ENCODE measurements at regions of chr2 and their contacts with region 1.

Region 1: GRCh38 chr2:160324161-160324800 is 124.2 kb upstream of the ITGB6 start:
- DNase-seq: peak; percentile 62
- H3K4me3 Mint-ChIP-seq: no peak overlapping the region
- H3K27ac Mint-ChIP-seq: no peak overlapping the region
- H3K4me1 Mint-ChIP-seq: peaks cover 80% of the 10 kb centered on the region
- H3K27me3 Mint-ChIP-seq: no peaks in the 10 kb centered on the region

Region 2: DNA sequence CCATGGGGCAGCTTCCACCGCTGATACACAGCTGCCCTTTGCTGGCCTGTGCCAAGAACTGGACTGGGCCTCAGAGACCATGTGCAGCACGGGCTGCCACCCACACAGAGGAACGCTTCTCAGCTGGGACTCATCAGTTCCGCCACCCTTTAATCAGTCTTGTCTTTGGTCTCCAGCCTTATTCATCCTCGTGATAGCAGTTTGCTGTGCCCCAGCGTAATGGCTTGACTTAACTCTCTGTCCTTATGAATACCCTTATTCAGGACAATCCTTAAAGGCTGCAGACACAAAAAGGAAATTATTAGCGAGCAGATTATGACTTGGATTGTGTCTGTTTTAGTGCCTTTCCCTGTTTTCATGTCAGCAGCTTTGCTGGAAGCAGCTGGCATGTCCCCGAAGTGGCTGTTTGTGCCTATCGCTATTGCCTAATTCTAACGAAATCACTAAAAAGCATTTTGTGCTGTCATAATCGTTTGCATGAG is 1638.0 kb before region 1 on chr2:
- CTCF ChIA-PET with region 1: no interaction called
- POLR2A ChIA-PET with region 1: no interaction called
- intact Hi-C with region 1: no loop called
- DNase-seq: no peak
- H3K4me3 Mint-ChIP-seq: no peak overlapping the region
- H3K27ac Mint-ChIP-seq: no peak overlapping the region
- H3K4me1 Mint-ChIP-seq: no peaks in the 10 kb centered on the region
- H3K27me3 Mint-ChIP-seq: peaks cover 6% of the 10 kb centered on the region

Region 3: DNA sequence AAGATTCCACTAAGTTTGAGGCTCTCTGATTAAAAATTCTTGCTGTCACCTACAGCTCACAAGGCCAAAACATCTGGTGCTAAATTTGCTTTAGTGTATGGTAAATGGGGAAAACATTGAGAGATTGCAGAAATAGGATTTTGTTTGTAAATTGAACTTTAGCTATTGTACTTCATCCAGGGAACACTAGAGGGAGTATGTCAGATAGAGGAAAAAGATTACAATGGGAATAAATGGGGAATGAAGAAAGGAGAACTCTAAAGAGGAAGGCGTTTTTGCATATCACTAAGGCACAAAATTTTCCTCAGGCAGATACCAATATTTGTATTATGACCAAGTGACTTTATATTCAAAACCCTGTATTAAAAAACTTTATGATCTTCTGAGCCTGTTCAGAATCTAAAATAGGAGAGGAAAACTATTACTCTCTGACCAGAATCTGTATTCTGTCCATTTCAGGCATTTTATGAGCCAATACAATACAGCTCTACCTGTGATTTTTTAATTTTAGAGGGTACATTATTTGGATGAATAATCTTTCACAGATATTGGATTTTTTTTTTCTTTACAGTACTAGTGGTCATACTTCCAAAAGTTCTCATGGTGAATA is 71.9 kb before region 1 on chr2:
- CTCF ChIA-PET with region 1: interaction called, 14 read pairs
- POLR2A ChIA-PET with region 1: no interaction called
- intact Hi-C with region 1: no loop called
- DNase-seq: no peak
- H3K4me3 Mint-ChIP-seq: no peak overlapping the region
- H3K27ac Mint-ChIP-seq: no peak overlapping the region
- H3K4me1 Mint-ChIP-seq: no peaks in the 10 kb centered on the region
- H3K27me3 Mint-ChIP-seq: peaks cover 1% of the 10 kb centered on the region

Region 4: GRCh38 chr2:160288324-160288723 is 36.0 kb before region 1 on chr2:
- CTCF ChIA-PET with region 1: no interaction called
- POLR2A ChIA-PET with region 1: no interaction called
- intact Hi-C with region 1: no loop called
- DNase-seq: no peak
- H3K4me3 Mint-ChIP-seq: no peak overlapping the region
- H3K27ac Mint-ChIP-seq: no peak overlapping the region
- H3K4me1 Mint-ChIP-seq: peaks cover 19% of the 10 kb centered on the region
- H3K27me3 Mint-ChIP-seq: no peaks in the 10 kb centered on the region

Region 5: DNA sequence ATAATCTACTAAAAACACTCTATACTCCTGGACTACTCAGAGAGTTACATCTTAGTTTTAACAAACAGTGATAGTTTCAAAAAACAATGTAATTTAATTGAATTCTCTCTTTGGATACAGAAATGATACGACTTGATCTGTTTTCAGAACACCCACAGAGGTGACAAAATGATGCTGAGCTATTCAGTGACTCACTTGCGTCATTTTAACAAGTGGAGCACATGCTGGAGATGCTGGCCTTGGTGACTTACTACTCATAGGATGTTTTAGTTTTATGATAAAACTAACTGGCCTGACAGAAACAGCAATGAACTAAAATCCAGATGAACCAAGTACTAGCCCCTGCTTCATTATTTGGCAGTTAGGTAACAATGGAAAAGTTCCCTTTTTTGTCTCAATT is 22.9 kb before region 1 on chr2:
- CTCF ChIA-PET with region 1: interaction called, 6 read pairs
- POLR2A ChIA-PET with region 1: interaction called, 3 read pairs
- intact Hi-C with region 1: loop called (anchors 1 kb)
- DNase-seq: peak; percentile 53
- H3K4me3 Mint-ChIP-seq: no peak overlapping the region
- H3K27ac Mint-ChIP-seq: peak overlapping the region; percentile 55
- H3K4me1 Mint-ChIP-seq: peaks cover 55% of the 10 kb centered on the region
- H3K27me3 Mint-ChIP-seq: no peaks in the 10 kb centered on the region

Region 6: DNA sequence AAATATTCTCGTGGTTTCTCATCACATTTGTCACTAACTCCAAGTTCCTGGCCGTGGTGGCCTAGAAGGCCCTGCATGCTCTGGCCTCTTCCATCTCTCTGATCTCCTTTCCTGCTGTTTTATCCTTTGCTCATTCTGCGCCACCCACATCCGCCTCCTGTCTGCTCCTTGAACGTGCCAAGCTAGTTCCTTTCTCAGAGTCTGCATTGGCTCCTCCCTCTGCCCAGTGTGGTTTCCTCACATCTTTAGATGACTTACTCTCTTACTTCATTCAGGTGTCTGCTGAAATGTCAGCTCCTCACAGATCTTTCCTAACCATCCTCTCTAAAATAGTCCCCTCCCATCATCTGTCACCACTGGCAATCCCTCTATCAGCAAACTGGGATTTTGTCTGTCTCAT is 328.0 kb after region 1 on chr2:
- CTCF ChIA-PET with region 1: no interaction called
- POLR2A ChIA-PET with region 1: interaction called, 3 read pairs
- intact Hi-C with region 1: loop called (anchors 10 kb)
- DNase-seq: peak; percentile 82
- H3K4me3 Mint-ChIP-seq: no peak overlapping the region
- H3K27ac Mint-ChIP-seq: peak overlapping the region; percentile 30
- H3K4me1 Mint-ChIP-seq: peaks cover 26% of the 10 kb centered on the region
- H3K27me3 Mint-ChIP-seq: peaks cover 1% of the 10 kb centered on the region

Region 7: GRCh38 chr2:160994141-160995002 is 670.1 kb after region 1 on chr2:
- CTCF ChIA-PET with region 1: interaction called, 33 read pairs
- POLR2A ChIA-PET with region 1: no interaction called
- intact Hi-C with region 1: loop called (anchors 1 kb)
- DNase-seq: peak; percentile 71
- H3K4me3 Mint-ChIP-seq: no peak overlapping the region
- H3K27ac Mint-ChIP-seq: no peak overlapping the region
- H3K4me1 Mint-ChIP-seq: peaks cover 6% of the 10 kb centered on the region
- H3K27me3 Mint-ChIP-seq: no peaks in the 10 kb centered on the region

Measured in activated CD4-positive, alpha-beta memory T cell treated with anti-CD3 and anti-CD28 coated beads for 36 hours (primary cell).